Common myeloid progenitor, CD34-positive (primary cell): ENCODE measurements at regions of chr1 and their contacts with region 1.

Region 1: GRCh38 chr1:201254625-201255506 is 28.4 kb upstream of the PKP1 start:
- DNase-seq: peak; percentile 25 to 54 (median 45)
- H3K4me3 ChIP-seq: no peak overlapping the region
- H3K27ac ChIP-seq: no peak overlapping the region
- H3K4me1 ChIP-seq: peaks cover 0 to 6% (median 3%) of the 10 kb centered on the region in 4 experiments
- H3K27me3 ChIP-seq: peaks cover 0 to 17% (median 7%) of the 10 kb centered on the region in 5 experiments

Region 2: DNA sequence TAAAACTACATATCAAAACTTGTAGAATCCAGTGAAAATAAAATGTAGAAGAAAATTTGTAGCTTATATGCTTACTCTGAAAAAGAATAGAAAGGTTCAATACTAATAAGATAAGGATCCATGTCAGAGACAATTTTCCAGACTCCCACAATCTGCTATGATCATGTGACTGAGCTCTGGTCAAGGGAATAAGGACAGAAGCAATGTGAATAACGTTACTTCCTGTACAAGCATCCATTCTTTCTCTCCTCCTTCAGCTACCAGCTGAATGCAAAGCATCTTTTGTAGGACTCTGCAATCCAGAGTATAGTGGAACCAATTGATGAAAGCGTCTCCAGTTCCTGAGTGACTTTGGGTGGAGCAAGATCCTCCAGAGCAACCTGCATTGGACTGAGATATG is 10.8 kb before region 1 on chr1:
- CTCF ChIA-PET with region 1: interaction called, 10 read pairs
- POLR2A ChIA-PET with region 1: no interaction called
- DNase-seq: no peak
- H3K4me3 ChIP-seq: no peak overlapping the region
- H3K27ac ChIP-seq: no peak overlapping the region
- H3K4me1 ChIP-seq: no peaks in the 10 kb centered on the region
- H3K27me3 ChIP-seq: peaks cover 2 to 11% (median 4%) of the 10 kb centered on the region in 5 experiments

Region 3: DNA sequence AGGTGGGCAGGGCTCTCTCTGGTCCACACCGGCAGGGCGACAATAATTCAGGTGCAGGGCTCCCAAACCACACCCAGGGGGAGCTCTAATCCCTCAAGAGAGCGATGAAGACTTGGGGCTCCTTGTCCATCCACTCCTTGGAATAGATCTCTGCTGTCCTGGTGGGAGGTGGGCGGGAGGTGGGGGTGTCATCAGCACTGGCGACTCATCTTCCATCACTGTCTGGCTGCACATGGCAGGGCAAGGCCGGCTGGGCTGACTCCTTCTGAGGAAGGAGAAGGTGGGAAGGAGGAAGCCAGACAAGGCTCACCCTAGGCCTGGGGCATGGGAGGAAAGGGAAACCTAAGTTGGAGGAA is 93.3 kb after region 1 on chr1:
- CTCF ChIA-PET with region 1: interaction called, 10 read pairs
- POLR2A ChIA-PET with region 1: no interaction called
- DNase-seq: peak; percentile 40 to 64 (median 50)
- H3K4me3 ChIP-seq: no peak overlapping the region
- H3K27ac ChIP-seq: no peak overlapping the region
- H3K4me1 ChIP-seq: no peaks in the 10 kb centered on the region
- H3K27me3 ChIP-seq: peaks cover 0 to 19% (median 7%) of the 10 kb centered on the region in 5 experiments

Region 4: GRCh38 chr1:201361652-201362504 is 107.0 kb after region 1 on chr1:
- CTCF ChIA-PET with region 1: interaction called, 87 read pairs
- POLR2A ChIA-PET with region 1: no interaction called
- DNase-seq: peak; percentile 39 to 63 (median 57)
- H3K4me3 ChIP-seq: no peak overlapping the region
- H3K27ac ChIP-seq: no peak overlapping the region
- H3K4me1 ChIP-seq: no peaks in the 10 kb centered on the region
- H3K27me3 ChIP-seq: peaks cover 0 to 24% (median 5%) of the 10 kb centered on the region in 5 experiments

Region 5: DNA sequence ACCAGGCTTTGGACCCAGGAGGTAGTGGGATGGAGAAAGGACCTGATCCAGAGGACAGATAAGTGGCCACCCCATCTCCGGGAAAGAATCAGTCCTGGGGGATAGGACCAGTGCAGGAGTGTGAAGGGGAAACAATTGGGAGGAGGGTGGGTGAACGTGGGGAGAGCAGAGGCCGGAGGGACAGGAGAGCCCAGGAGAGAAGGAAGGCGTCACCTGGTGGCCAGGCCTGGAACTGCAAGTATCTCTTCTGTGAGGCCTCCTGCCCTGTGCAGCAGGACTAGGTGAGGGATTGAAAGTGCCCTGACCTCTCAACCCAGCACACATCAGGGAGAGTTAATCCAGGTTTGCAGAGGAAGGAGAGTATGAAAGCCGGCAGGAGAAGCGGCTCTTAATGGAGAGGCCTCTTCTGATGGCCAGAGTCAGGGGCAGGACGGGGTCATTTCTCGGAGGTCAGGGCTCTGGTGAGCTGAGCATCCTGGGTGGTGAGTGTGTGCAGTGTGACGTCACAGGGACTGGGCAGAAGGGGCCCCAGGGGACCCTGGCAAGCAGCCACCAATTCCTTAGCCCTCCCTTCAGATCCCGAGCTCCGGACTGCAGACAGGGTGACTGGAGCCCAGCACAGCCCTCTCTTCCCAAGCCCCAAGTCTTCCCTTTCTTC is 153.4 kb after region 1 on chr1:
- CTCF ChIA-PET with region 1: interaction called, 16 read pairs
- POLR2A ChIA-PET with region 1: no interaction called
- DNase-seq: peak; percentile 64 to 75 (median 70)
- H3K4me3 ChIP-seq: no peak overlapping the region
- H3K27ac ChIP-seq: no peak overlapping the region
- H3K4me1 ChIP-seq: peaks cover 0 to 2% (median 0%) of the 10 kb centered on the region in 4 experiments
- H3K27me3 ChIP-seq: peaks cover 0 to 12% (median 6%) of the 10 kb centered on the region in 5 experiments

Region 6: DNA sequence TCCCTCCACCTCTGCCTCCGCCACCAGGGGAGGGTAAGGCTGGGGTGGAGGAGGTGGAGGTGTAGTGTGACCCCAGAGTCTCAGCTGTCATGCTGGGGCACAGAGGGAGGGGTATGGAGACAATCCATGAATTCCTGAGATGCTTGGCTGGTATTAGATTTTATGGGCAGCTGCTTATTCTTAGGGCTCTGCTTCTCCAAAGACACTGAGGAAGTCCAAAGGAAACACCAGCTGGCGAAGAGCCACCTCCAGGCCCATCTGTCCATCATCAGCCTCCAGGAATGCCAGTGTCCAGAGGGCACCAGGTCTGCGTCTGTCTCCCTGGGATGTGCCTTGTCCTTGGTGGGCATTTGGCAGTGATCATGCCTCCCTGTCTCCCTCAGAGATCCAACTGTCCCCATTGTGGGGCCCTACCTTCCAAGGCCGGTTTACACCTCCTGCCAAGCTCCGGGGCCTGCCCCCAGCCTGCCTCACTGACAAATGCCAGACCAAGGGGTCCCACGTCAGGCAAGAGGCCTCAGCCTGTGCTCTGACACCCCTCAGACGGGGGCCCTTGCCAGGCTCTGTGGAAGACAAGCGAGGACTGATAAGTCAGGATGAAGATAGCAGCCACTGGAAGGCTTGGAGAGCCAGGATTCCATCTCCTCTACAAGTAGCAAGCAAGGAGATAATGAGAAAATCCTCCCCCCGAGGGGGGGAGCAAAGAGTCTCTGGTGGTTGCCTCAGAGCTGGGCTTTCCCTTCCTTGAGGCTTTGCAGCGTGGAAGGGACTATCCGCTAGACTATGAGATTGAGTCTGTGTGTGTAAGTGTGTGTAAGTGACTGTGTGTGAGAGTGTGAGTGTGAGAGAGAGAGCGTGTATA is 165.1 kb after region 1 on chr1:
- CTCF ChIA-PET with region 1: no interaction called
- POLR2A ChIA-PET with region 1: no interaction called
- DNase-seq: no peak
- H3K4me3 ChIP-seq: no peak overlapping the region
- H3K27ac ChIP-seq: no peak overlapping the region
- H3K4me1 ChIP-seq: no peaks in the 10 kb centered on the region
- H3K27me3 ChIP-seq: peaks cover 0 to 5% (median 0%) of the 10 kb centered on the region in 5 experiments